Endothelial cell of umbilical vein (primary cell): ENCODE measurements at regions of chr1 and their contacts with region 1.

Region 1: DNA sequence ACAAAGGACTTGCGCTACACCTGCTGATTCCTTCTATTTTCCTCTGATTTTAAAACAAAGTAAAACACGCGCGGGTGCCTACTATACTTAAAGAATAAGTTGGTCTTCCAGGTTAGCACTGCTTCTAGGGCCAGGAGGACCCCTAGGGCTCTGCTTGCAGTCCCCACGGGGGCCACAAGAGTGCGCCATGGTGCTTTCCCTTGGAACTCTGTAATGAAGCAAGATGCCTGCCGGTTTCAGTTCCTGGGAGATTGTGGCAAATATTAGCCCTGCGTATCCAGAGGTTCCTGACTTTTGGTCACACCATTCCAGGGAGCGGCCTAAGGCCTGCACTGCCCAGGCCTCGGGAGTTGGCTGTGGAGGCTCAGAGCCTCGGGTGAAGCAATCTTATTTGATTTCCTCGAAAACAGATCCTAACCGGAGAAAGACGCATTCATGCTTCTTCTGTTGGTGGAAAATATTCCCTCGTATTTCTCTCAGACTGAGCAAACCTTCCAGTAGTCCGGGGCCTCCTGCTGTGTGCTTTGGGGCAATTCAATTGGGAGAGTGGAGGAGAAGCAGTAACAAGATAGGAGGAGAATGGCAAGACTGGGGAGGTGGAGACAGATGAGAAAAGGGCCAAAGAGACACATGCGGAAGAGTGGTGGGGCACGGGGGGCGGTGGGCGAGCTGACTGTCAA is 25.3 kb downstream of the ADAM30 start:
- DNase-seq: peak; percentile 72
- H3K4me3 ChIP-seq: no peak overlapping the region
- H3K27ac ChIP-seq: no peak overlapping the region
- H3K4me1 ChIP-seq: no peaks in the 10 kb centered on the region
- H3K27me3 ChIP-seq: peaks cover under 1 to 6% of the 10 kb centered on the region in 2 experiments
- CTCF ChIP-seq: peak; percentile 92 to 94
- POLR2A ChIP-seq: no peak

Region 2: GRCh38 chr1:119549719-119550132 is 321.3 kb before region 1 on chr1:
- CTCF ChIA-PET with region 1: no interaction called
- POLR2A ChIA-PET with region 1: no interaction called
- dilution Hi-C with region 1: no loop called
- intact Hi-C with region 1: no loop called
- DNase-seq: peak; percentile 63
- H3K4me3 ChIP-seq: no peak overlapping the region
- H3K27ac ChIP-seq: no peak overlapping the region
- H3K4me1 ChIP-seq: no peaks in the 10 kb centered on the region
- H3K27me3 ChIP-seq: peaks cover 2 to 4% of the 10 kb centered on the region in 2 experiments
- CTCF ChIP-seq: peak; percentile 64 to 74
- POLR2A ChIP-seq: no peak

Region 3: DNA sequence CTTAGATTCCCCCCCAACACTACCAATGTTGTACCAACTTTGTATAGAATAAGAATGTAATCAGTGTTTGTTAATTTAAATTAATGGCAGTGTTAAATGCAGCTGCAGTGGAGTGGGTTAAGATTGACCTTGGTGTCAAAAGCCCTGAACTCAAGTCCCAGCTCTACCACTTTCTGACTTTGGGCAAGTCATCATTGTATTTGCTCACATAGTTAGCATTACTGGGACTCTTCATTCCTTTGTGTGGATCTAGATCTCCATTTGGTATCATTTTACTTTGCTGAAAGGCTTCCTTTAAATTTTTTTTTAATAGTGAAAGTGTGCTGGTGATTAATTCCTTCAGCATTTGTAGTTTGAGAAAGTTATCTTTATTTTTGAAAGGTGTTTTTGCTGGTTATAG is 181.5 kb before region 1 on chr1:
- CTCF ChIA-PET with region 1: no interaction called
- POLR2A ChIA-PET with region 1: no interaction called
- dilution Hi-C with region 1: no loop called
- intact Hi-C with region 1: no loop called
- DNase-seq: no peak
- H3K4me3 ChIP-seq: no peak overlapping the region
- H3K27ac ChIP-seq: no peak overlapping the region
- H3K4me1 ChIP-seq: no peaks in the 10 kb centered on the region
- H3K27me3 ChIP-seq: peaks cover 24 to 33% of the 10 kb centered on the region in 2 experiments
- CTCF ChIP-seq: no peak
- POLR2A ChIP-seq: no peak

Region 4: GRCh38 chr1:119827010-119827409 is 44.0 kb before region 1 on chr1:
- CTCF ChIA-PET with region 1: no interaction called
- POLR2A ChIA-PET with region 1: no interaction called
- dilution Hi-C with region 1: no loop called
- intact Hi-C with region 1: no loop called
- DNase-seq: no peak
- H3K4me3 ChIP-seq: no peak overlapping the region
- H3K27ac ChIP-seq: no peak overlapping the region
- H3K4me1 ChIP-seq: no peaks in the 10 kb centered on the region
- H3K27me3 ChIP-seq: peaks cover 2 to 20% of the 10 kb centered on the region in 2 experiments
- CTCF ChIP-seq: peak; percentile 30 to 35
- POLR2A ChIP-seq: no peak

Region 5: GRCh38 chr1:119859647-119860046 is 11.4 kb before region 1 on chr1:
- CTCF ChIA-PET with region 1: interaction called, 13 read pairs
- POLR2A ChIA-PET with region 1: no interaction called
- dilution Hi-C with region 1: no loop called
- intact Hi-C with region 1: no loop called
- DNase-seq: peak; percentile 77
- H3K4me3 ChIP-seq: no peak overlapping the region
- H3K27ac ChIP-seq: peak overlapping the region; percentile 85
- H3K4me1 ChIP-seq: peaks cover 23% of the 10 kb centered on the region
- H3K27me3 ChIP-seq: no peaks in the 10 kb centered on the region
- CTCF ChIP-seq: no peak
- POLR2A ChIP-seq: no peak

Region 6: DNA sequence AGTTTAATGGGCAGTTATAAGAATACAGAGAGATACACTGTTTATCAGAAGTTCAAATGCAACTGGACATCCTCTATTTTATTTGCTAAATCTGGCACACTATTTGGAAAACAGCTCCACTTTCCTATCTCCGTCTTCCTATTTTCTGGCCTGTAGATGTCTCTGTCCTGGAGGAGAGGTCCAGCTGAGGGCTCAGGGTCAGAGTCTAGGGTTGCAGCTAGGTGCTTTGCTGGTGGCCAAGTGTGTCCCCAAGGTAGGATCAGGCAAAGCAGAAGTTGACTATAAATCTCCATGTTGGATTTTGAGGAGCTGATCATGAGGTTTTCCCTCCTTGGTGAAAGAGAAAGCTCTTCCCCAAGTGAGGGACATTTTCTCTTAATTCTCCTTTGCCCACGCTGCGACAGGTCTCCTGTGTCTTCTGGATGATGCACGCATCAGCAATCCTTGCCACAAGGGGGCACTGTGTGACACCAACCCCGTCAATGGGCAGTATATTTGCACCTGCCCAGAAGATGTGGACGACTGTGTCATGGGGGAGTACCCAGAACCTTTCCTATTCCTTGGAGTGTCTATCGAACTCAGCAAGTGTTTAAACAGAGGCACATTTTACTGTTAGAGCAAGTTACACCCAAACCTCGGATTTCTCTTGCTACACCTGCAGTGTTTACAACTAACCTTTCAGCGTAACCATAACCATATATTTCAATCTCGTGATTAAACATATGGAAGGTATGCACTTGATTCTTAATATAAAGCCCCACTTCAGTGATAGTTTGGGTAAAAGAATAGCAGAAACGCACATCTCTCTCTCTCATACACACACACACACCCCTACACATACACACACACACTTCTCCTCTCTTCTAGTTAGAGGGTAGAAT is 15.1 kb after region 1 on chr1:
- CTCF ChIA-PET with region 1: interaction called, 11 read pairs
- POLR2A ChIA-PET with region 1: no interaction called
- dilution Hi-C with region 1: no loop called
- intact Hi-C with region 1: no loop called
- DNase-seq: peak; percentile 54
- H3K4me3 ChIP-seq: no peak overlapping the region
- H3K27ac ChIP-seq: no peak overlapping the region
- H3K4me1 ChIP-seq: no peaks in the 10 kb centered on the region
- H3K27me3 ChIP-seq: peaks cover 12 to 14% of the 10 kb centered on the region in 2 experiments
- CTCF ChIP-seq: peak; percentile 80 to 82
- POLR2A ChIP-seq: no peak

Region 7: DNA sequence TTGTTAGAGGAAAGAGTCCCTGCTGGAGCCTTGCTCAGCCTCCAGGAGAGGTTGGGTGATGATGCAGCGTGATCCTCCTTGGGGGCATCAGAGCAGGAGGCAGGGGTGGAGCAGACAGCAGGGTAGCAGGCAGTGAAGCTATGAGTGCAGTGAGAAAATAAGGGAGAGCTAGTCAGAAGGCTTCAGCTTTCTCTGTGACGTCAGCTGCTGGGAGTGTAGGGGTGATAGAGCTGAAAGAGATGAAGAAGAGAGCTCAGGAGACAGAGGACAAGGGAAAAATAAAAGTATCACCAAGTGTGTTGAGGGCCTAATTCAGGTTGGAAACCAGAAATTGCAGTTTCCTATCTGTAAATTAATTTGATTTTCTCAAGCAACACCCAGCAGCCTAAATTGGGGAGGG is 27.5 kb after region 1 on chr1:
- CTCF ChIA-PET with region 1: no interaction called
- POLR2A ChIA-PET with region 1: no interaction called
- dilution Hi-C with region 1: no loop called
- intact Hi-C with region 1: no loop called
- DNase-seq: no peak
- H3K4me3 ChIP-seq: no peak overlapping the region
- H3K27ac ChIP-seq: no peak overlapping the region
- H3K4me1 ChIP-seq: no peaks in the 10 kb centered on the region
- H3K27me3 ChIP-seq: peaks cover 11 to 17% of the 10 kb centered on the region in 2 experiments
- CTCF ChIP-seq: no peak
- POLR2A ChIP-seq: no peak